ENCODE measurements at regions of chr2 and their contacts with region 1.

Region 1: GRCh38 chr2:98731041-98731893 is at the start of gene MGAT4A:
- DNase-seq: peak; percentile 82
- H3K4me3 Mint-ChIP-seq: peak within 1 kb of the TSS; percentile 91
- H3K27ac Mint-ChIP-seq: peak within 1 kb of the TSS; percentile 87
- H3K4me1 Mint-ChIP-seq: peaks cover 80% of the 10 kb centered on the region
- H3K27me3 Mint-ChIP-seq: no peaks in the 10 kb centered on the region
- total RNA-seq, gene MGAT4A: 47.0 and 49.7 TPM in 2 replicates

Region 2: GRCh38 chr2:98713332-98714015 is 17.8 kb before region 1 on chr2:
- intact Hi-C with region 1: loop called (anchors 2 kb)
- DNase-seq: no peak
- H3K4me3 Mint-ChIP-seq: no peak overlapping the region
- H3K27ac Mint-ChIP-seq: peak overlapping the region; percentile 41
- H3K4me1 Mint-ChIP-seq: peaks cover 83% of the 10 kb centered on the region
- H3K27me3 Mint-ChIP-seq: no peaks in the 10 kb centered on the region